ENCODE measurements at regions of chr7 and their contacts with region 1.

Region 1: DNA sequence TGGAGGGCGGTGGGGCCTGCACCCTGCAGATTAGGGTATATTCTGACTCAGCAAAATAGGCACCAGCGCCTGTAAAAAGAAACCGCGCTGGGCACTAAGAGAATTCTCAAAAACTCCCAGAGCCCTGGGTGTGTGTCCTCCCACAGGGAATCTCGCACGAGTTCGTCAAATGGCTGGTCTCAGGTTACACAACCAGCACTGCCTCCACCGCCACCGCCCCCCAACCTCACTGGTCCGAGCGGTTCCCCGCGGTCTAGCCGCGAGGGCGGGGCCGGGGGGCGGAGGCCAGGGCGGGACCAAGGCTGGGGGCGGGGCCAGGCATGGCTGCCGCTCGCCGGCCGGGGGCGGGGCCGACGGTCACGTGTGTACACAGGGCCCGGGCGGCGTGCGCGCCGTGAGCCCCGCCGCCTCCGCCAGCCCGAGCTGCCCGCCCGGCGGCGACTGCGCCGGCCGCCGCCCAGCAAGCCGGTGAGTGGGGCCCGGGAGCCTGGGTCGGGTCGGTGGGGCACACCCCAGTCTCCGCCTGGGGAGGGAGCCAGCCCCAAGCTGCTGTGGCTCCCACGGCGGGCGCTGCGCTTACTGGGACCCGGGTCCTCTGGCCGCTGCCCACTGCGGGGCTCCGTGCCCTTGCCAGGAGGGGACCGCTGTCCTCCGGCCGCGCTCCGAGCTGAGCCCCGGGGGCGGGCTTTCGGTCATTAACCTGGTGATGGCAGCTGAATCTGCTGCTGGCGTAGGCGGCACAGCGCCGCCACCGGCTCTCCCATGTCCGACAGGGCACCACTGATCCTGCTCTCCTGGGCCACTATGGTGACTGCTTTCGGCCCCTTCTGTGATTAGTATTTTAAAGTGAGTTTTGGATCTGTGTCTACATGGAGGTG is at the start of gene GPR146:
- DNase-seq: peak; percentile 93
- H3K4me3 Mint-ChIP-seq: peak within 1 kb of the TSS; percentile 89
- H3K27ac Mint-ChIP-seq: peak within 1 kb of the TSS; percentile 87
- H3K4me1 Mint-ChIP-seq: peaks cover 71% of the 10 kb centered on the region
- H3K27me3 Mint-ChIP-seq: no peaks in the 10 kb centered on the region
- total RNA-seq, gene GPR146: 10.0 to 10.1 TPM

Region 2: GRCh38 chr7:1028031-1028770 is 16.2 kb before region 1 on chr7:
- CTCF ChIA-PET with region 1: interaction called, 6 read pairs
- POLR2A ChIA-PET with region 1: interaction called, 11 read pairs
- DNase-seq: peak; percentile 89
- H3K4me3 Mint-ChIP-seq: peak overlapping the region; percentile 76
- H3K27ac Mint-ChIP-seq: peak overlapping the region; percentile 79
- H3K4me1 Mint-ChIP-seq: peaks cover 43% of the 10 kb centered on the region
- H3K27me3 Mint-ChIP-seq: no peaks in the 10 kb centered on the region

Region 3: GRCh38 chr7:1059200-1060091 is 15.0 kb after region 1 on chr7:
- CTCF ChIA-PET with region 1: interaction called, 12 read pairs
- POLR2A ChIA-PET with region 1: interaction called, 10 read pairs
- DNase-seq: no peak
- H3K4me3 Mint-ChIP-seq: no peak overlapping the region
- H3K27ac Mint-ChIP-seq: peak overlapping the region; percentile 31
- H3K4me1 Mint-ChIP-seq: peaks cover 26% of the 10 kb centered on the region
- H3K27me3 Mint-ChIP-seq: peaks cover 1% of the 10 kb centered on the region

Region 4: GRCh38 chr7:1065263-1066260 is 21.1 kb after region 1 on chr7:
- CTCF ChIA-PET with region 1: interaction called, 16 read pairs
- POLR2A ChIA-PET with region 1: no interaction called
- DNase-seq: peak; percentile 89
- H3K4me3 Mint-ChIP-seq: no peak overlapping the region
- H3K27ac Mint-ChIP-seq: no peak overlapping the region
- H3K4me1 Mint-ChIP-seq: peaks cover 6% of the 10 kb centered on the region
- H3K27me3 Mint-ChIP-seq: peaks cover 1% of the 10 kb centered on the region